B cell (primary cell): ENCODE measurements at regions of chr9 and their contacts with region 1.

Region 1: GRCh38 chr9:35014517-35014916 is 25.0 kb downstream of the DNAJB5 start:
- DNase-seq: no peak
- ATAC-seq: no peak
- H3K4me3 ChIP-seq: no peak overlapping the region
- H3K4me3 Mint-ChIP-seq: no peak overlapping the region
- H3K27ac ChIP-seq: no peak overlapping the region
- H3K27ac Mint-ChIP-seq: no peak overlapping the region
- H3K4me1 ChIP-seq: no peaks in the 10 kb centered on the region
- H3K4me1 Mint-ChIP-seq: no peaks in the 10 kb centered on the region
- H3K27me3 ChIP-seq: no peaks in the 10 kb centered on the region
- H3K27me3 Mint-ChIP-seq: no peaks in the 10 kb centered on the region
- CTCF ChIP-seq: no peak

Region 2: GRCh38 chr9:34651876-34652601 is 362.5 kb before region 1 on chr9 and contains the start of gene IL11RA:
- CTCF ChIA-PET with region 1: no interaction called
- POLR2A ChIA-PET with region 1: no interaction called
- intact Hi-C with region 1: no loop called
- DNase-seq: no peak
- ATAC-seq: peak; percentile 28
- H3K4me3 ChIP-seq: no peak within 1 kb of the TSS
- H3K4me3 Mint-ChIP-seq: peak within 1 kb of the TSS; percentile 20
- H3K27ac ChIP-seq: no peak within 1 kb of the TSS
- H3K27ac Mint-ChIP-seq: peak within 1 kb of the TSS; percentile 3
- H3K4me1 ChIP-seq: peaks cover 8 to 12% of the 10 kb centered on the region in 2 donors
- H3K4me1 Mint-ChIP-seq: peaks cover 30% of the 10 kb centered on the region
- H3K27me3 ChIP-seq: no peaks in the 10 kb centered on the region
- H3K27me3 Mint-ChIP-seq: peaks cover 3% of the 10 kb centered on the region
- CTCF ChIP-seq: no peak
- total RNA-seq, gene IL11RA: 47.3 and 52.1 TPM in 2 replicates

Region 3: GRCh38 chr9:35035851-35036701 is 21.6 kb after region 1 on chr9:
- CTCF ChIA-PET with region 1: no interaction called
- POLR2A ChIA-PET with region 1: interaction called, 10 read pairs
- intact Hi-C with region 1: no loop called
- DNase-seq: peak; percentile 25
- ATAC-seq: no peak
- H3K4me3 ChIP-seq: peak overlapping the region in 3 of 5 experiments; percentile 5 to 39 (median 10)
- H3K4me3 Mint-ChIP-seq: peak overlapping the region; percentile 68
- H3K27ac ChIP-seq: no peak overlapping the region
- H3K27ac Mint-ChIP-seq: no peak overlapping the region
- H3K4me1 ChIP-seq: peaks cover 3 to 5% of the 10 kb centered on the region in 2 donors
- H3K4me1 Mint-ChIP-seq: peaks cover 8% of the 10 kb centered on the region
- H3K27me3 ChIP-seq: no peaks in the 10 kb centered on the region
- H3K27me3 Mint-ChIP-seq: no peaks in the 10 kb centered on the region
- CTCF ChIP-seq: no peak